Mammary epithelial cell (primary cell): ENCODE measurements at regions of chr5 and their contacts with region 1.

Region 1: GRCh38 chr5:66329078-66329477 is 185.0 kb downstream of the SREK1 start:
- DNase-seq: peak; percentile 45
- H3K4me3 ChIP-seq: no peak overlapping the region
- H3K27ac ChIP-seq: no peak overlapping the region
- H3K4me1 ChIP-seq: no peaks in the 10 kb centered on the region
- H3K27me3 ChIP-seq: peaks cover 4% of the 10 kb centered on the region
- CTCF ChIP-seq: no peak

Region 2: DNA sequence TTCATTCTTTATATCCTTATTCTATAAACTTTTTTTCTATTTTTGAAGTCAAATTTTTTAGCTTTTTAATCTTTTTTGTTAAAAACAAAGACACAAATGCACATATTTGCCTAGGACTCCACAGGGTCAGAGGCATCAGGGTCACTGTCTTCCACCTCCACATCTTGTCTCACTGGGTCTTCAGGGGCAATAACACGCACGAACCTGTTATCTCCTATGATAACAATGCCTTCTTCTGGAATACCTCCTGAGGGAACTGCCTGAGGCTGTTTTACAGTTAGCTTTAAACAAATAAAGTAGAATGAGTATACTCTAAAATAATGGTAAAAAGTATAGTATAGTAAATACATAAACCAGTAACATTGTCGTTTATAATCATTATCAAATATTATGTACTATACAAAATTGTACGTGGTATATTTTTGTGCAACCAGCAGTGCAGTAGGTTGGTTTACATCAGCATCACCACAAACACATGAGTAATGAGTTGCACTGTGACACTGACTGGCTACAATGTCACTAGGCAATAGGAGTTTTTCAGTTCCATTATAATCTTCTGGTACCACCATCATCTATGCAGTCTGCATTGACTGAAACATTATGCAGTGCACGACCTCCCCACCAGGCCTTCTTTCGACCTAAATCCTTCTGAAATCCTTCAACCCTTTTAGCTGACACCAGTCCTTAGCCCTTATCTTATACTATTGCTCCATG is 79.3 kb before region 1 on chr5:
- CTCF ChIA-PET with region 1: no interaction called
- dilution Hi-C with region 1: loop called (anchors 5 kb)
- in situ Hi-C with region 1: no loop called
- intact Hi-C with region 1: no loop called
- DNase-seq: no peak
- H3K4me3 ChIP-seq: no peak overlapping the region
- H3K27ac ChIP-seq: no peak overlapping the region
- H3K4me1 ChIP-seq: peaks cover 5% of the 10 kb centered on the region
- H3K27me3 ChIP-seq: no peaks in the 10 kb centered on the region
- CTCF ChIP-seq: no peak

Region 3: DNA sequence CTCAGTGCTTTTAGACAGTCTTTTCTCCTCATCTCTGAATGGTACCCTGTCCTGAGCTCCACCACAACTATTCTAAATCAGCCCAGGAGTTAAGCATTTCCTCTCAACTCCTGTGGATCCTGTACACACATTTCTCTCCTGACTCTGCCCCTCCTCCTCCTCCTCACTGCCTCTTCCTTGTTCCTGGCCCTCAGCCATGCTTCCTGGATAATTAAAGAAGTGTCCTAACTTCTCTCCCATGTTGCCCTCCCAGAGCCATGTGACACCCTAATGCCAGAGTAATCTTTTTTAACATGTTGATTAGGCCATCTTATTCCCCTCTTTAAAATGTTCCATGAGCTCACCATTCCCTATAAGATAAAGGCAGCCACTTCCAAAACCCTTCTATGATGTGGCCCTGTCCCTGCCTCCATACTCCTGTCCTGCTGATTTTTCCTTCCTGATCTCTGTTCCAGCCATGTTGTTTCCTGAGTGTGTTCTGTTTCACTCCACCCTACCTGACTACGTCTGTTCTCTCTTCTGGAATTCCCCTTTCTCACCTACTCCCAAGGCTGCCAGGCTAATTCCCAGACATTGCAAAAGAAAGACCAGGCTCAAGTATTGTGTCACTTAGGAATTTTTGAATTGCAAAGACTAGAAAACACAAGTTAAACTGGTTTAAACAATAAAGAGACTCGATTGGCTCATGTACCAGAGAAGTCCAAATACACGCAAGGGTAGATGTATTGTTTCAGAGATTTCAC is 562.3 kb after region 1 on chr5:
- CTCF ChIA-PET with region 1: no interaction called
- dilution Hi-C with region 1: no loop called
- in situ Hi-C with region 1: no loop called
- intact Hi-C with region 1: no loop called
- DNase-seq: peak; percentile 99
- H3K4me3 ChIP-seq: no peak overlapping the region
- H3K27ac ChIP-seq: peak overlapping the region; percentile 100
- H3K4me1 ChIP-seq: peaks cover 56% of the 10 kb centered on the region
- H3K27me3 ChIP-seq: no peaks in the 10 kb centered on the region
- CTCF ChIP-seq: no peak